ENCODE measurements at regions of chr17 and their contacts with region 1.

Region 1: GRCh38 chr17:38752119-38752929 is at the start of gene PSMB3:
- DNase-seq: peak; percentile 86 to 100 (median 93)
- ATAC-seq: peak; percentile 85
- H3K4me3 ChIP-seq: peak within 1 kb of the TSS; percentile 90
- H3K4me3 Mint-ChIP-seq: peak within 1 kb of the TSS; percentile 99
- H3K27ac ChIP-seq: peak within 1 kb of the TSS; percentile 80 to 93
- H3K27ac Mint-ChIP-seq: peak within 1 kb of the TSS; percentile 83
- H3K4me1 ChIP-seq: peaks cover 69% of the 10 kb centered on the region
- H3K4me1 Mint-ChIP-seq: peaks cover 38% of the 10 kb centered on the region
- H3K27me3 ChIP-seq: peaks cover 31 to 33% of the 10 kb centered on the region in 2 experiments
- H3K27me3 Mint-ChIP-seq: peaks cover 27% of the 10 kb centered on the region
- CTCF ChIP-seq: no peak
- total RNA-seq, gene PSMB3: 46.6 to 55.0 TPM

Region 2: GRCh38 chr17:38674749-38675615 is 77.3 kb before region 1 on chr17 and contains the start of gene EPOP:
- CTCF ChIA-PET with region 1: no interaction called
- POLR2A ChIA-PET with region 1: no interaction called
- intact Hi-C with region 1: loop called (anchors 5 kb)
- DNase-seq: peak; percentile 47 to 92 (median 80)
- ATAC-seq: peak; percentile 80
- H3K4me3 ChIP-seq: peak within 1 kb of the TSS; percentile 38
- H3K4me3 Mint-ChIP-seq: peak within 1 kb of the TSS; percentile 75
- H3K27ac ChIP-seq: no peak within 1 kb of the TSS
- H3K27ac Mint-ChIP-seq: no peak within 1 kb of the TSS
- H3K4me1 ChIP-seq: peaks cover 37% of the 10 kb centered on the region
- H3K4me1 Mint-ChIP-seq: peaks cover 24% of the 10 kb centered on the region
- H3K27me3 ChIP-seq: peaks cover 26 to 34% of the 10 kb centered on the region in 2 experiments
- H3K27me3 Mint-ChIP-seq: peaks cover 54% of the 10 kb centered on the region
- CTCF ChIP-seq: no peak
- total RNA-seq, gene EPOP: 0.16 to 0.34 TPM

Region 3: DNA sequence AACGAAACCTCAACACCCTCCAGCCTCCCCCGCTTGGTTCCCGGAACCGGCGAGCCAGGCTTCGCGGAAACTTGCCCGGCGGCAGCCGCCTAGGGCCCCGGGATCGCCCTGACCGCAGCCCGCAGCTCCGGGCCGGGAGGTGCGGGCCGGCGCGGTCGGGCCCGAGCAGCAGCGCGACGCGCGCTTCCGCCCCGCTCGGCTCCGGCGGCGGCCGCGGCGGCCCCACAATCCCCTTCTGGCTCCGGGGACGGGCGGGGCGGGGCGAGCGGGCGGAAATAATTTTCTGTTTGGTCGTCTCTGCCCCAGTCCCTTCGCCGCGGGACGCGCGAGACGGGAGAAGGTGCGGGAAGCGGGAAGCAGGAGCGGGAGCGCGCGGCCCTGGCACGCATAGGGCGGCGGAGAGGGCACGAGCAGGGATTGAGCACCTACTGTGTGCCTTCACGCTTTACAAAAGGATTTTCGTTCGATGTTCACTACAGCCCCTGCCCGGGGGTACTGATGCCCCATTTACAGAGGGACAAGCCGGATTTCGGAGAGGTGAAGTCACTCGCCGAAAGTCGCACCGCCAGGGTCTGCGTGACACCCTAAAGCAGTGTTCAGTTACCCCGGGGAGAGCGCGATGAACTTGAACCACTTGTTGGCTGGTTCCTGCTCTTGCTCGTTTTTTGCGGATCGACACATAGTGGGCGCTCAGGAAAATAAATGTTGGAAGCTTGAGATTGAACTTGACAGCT is 50.0 kb before region 1 on chr17:
- CTCF ChIA-PET with region 1: interaction called, 4 read pairs
- POLR2A ChIA-PET with region 1: interaction called, 15 read pairs
- intact Hi-C with region 1: loop called (anchors 2 kb)
- DNase-seq: peak; percentile 62 to 92 (median 76)
- ATAC-seq: peak; percentile 33
- H3K4me3 ChIP-seq: peak overlapping the region; percentile 73
- H3K4me3 Mint-ChIP-seq: peak overlapping the region; percentile 95
- H3K27ac ChIP-seq: peak overlapping the region; percentile 94 to 97
- H3K27ac Mint-ChIP-seq: peak overlapping the region; percentile 88
- H3K4me1 ChIP-seq: peaks cover 61% of the 10 kb centered on the region
- H3K4me1 Mint-ChIP-seq: peaks cover 50% of the 10 kb centered on the region
- H3K27me3 ChIP-seq: no peaks in the 10 kb centered on the region
- H3K27me3 Mint-ChIP-seq: no peaks in the 10 kb centered on the region
- CTCF ChIP-seq: no peak

Region 4: GRCh38 chr17:38729886-38730525 is 22.3 kb before region 1 on chr17 and contains the start of gene CISD3:
- CTCF ChIA-PET with region 1: interaction called, 3 read pairs
- POLR2A ChIA-PET with region 1: interaction called, 21 read pairs
- intact Hi-C with region 1: loop called (anchors 1 to 2 kb)
- DNase-seq: peak; percentile 67 to 96 (median 84)
- ATAC-seq: peak; percentile 70
- H3K4me3 ChIP-seq: peak within 1 kb of the TSS; percentile 71
- H3K4me3 Mint-ChIP-seq: peak within 1 kb of the TSS; percentile 99
- H3K27ac ChIP-seq: peak within 1 kb of the TSS; percentile 60 to 80
- H3K27ac Mint-ChIP-seq: peak within 1 kb of the TSS; percentile 89
- H3K4me1 ChIP-seq: peaks cover 89% of the 10 kb centered on the region
- H3K4me1 Mint-ChIP-seq: peaks cover 85% of the 10 kb centered on the region
- H3K27me3 ChIP-seq: no peaks in the 10 kb centered on the region
- H3K27me3 Mint-ChIP-seq: no peaks in the 10 kb centered on the region
- CTCF ChIP-seq: peak; percentile 54
- total RNA-seq, gene CISD3: 4.7 to 5.7 TPM

Region 5: GRCh38 chr17:38799378-38800236 is 47.3 kb after region 1 on chr17 and contains the start of gene PIP4K2B:
- CTCF ChIA-PET with region 1: no interaction called
- POLR2A ChIA-PET with region 1: interaction called, 5 read pairs
- intact Hi-C with region 1: loop called in 1 of 2 experiments (anchors 1 kb)
- DNase-seq: peak; percentile 66 to 93 (median 77)
- ATAC-seq: peak; percentile 69
- H3K4me3 ChIP-seq: peak within 1 kb of the TSS; percentile 65
- H3K4me3 Mint-ChIP-seq: peak within 1 kb of the TSS; percentile 92
- H3K27ac ChIP-seq: peak within 1 kb of the TSS; percentile 48 to 77
- H3K27ac Mint-ChIP-seq: peak within 1 kb of the TSS; percentile 90
- H3K4me1 ChIP-seq: peaks cover 26% of the 10 kb centered on the region
- H3K4me1 Mint-ChIP-seq: peaks cover 44% of the 10 kb centered on the region
- H3K27me3 ChIP-seq: no peaks in the 10 kb centered on the region
- H3K27me3 Mint-ChIP-seq: no peaks in the 10 kb centered on the region
- CTCF ChIP-seq: no peak
- total RNA-seq, gene PIP4K2B: 17.0 to 17.2 TPM

Region 6: DNA sequence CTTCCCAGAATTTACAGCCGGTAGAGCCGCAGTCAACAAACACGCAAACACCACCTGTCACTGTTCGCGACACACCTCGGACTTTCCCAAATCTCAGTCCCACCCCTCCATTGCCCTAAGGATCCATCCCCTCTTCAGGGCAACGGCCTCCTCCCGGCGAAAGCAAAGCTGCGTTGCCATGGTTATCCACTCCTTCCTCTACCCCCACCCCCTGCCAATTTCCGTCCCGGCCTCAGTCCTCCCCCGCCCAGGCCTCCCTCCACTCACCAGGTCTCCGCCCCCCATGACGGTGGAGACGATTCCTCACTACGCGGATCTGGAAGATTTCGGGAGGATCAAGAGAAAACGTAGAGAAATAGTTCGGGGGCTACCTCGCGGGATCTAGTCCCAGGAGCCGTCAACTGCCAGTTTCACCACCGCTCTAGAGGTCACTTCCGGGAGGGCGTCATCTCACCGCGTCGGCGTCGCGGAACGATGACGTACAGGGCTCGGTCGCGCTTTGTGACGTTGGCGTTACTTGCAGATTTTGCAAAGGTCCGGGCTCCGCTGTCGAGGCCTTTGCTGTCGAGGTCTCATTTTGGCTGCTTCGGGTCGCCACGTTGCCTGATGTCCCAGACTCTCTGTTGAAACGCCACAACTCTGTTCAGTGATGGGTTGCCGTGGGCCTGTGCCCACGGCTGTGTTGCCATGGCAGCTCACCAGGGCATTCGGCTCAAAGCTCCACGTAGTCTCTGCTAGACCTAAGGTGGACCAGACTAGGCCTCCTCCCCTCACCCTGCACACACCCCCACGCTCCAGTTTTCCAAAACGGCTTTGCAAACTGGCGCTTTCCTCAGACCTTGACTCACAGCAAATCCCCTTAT is 72.8 kb after region 1 on chr17 and contains the start of gene CWC25:
- CTCF ChIA-PET with region 1: no interaction called
- POLR2A ChIA-PET with region 1: no interaction called
- intact Hi-C with region 1: loop called in 1 of 2 experiments (anchors 2 kb)
- DNase-seq: peak; percentile 90 to 100 (median 94)
- ATAC-seq: peak; percentile 81
- H3K4me3 ChIP-seq: peak within 1 kb of the TSS; percentile 66
- H3K4me3 Mint-ChIP-seq: peak within 1 kb of the TSS; percentile 99
- H3K27ac ChIP-seq: peak within 1 kb of the TSS; percentile 94 to 95
- H3K27ac Mint-ChIP-seq: peak within 1 kb of the TSS; percentile 100
- H3K4me1 ChIP-seq: peaks cover 25% of the 10 kb centered on the region
- H3K4me1 Mint-ChIP-seq: peaks cover 37% of the 10 kb centered on the region
- H3K27me3 ChIP-seq: no peaks in the 10 kb centered on the region
- H3K27me3 Mint-ChIP-seq: peaks cover 5% of the 10 kb centered on the region
- CTCF ChIP-seq: no peak
- total RNA-seq, gene CWC25: 63.0 to 63.3 TPM

Region 7: GRCh38 chr17:38853292-38854219 is 101.2 kb after region 1 on chr17 and contains the start of gene RPL23:
- CTCF ChIA-PET with region 1: no interaction called
- POLR2A ChIA-PET with region 1: interaction called, 22 read pairs
- intact Hi-C with region 1: no loop called
- DNase-seq: peak; percentile 77 to 97 (median 86)
- ATAC-seq: peak; percentile 80
- H3K4me3 ChIP-seq: peak within 1 kb of the TSS; percentile 67
- H3K4me3 Mint-ChIP-seq: peak within 1 kb of the TSS; percentile 90
- H3K27ac ChIP-seq: peak within 1 kb of the TSS; percentile 86 to 92
- H3K27ac Mint-ChIP-seq: peak within 1 kb of the TSS; percentile 96
- H3K4me1 ChIP-seq: peaks cover 29% of the 10 kb centered on the region
- H3K4me1 Mint-ChIP-seq: peaks cover 39% of the 10 kb centered on the region
- H3K27me3 ChIP-seq: no peaks in the 10 kb centered on the region
- H3K27me3 Mint-ChIP-seq: no peaks in the 10 kb centered on the region
- CTCF ChIP-seq: no peak
- total RNA-seq, gene RPL23: 2,293 to 2,296 TPM